ENCODE measurements at regions of chr17 and their contacts with region 1.

Region 1: GRCh38 chr17:30808785-30809286 is 15.7 kb downstream of the CRLF3 start:
- DNase-seq: peak in 8 of 9 experiments; percentile 1 to 88 (median 48)
- ATAC-seq: peak; percentile 85
- H3K4me3 ChIP-seq: peak overlapping the region; percentile 26 to 48
- H3K4me3 Mint-ChIP-seq: peak overlapping the region; percentile 83
- H3K27ac ChIP-seq: peak overlapping the region; percentile 53 to 89
- H3K27ac Mint-ChIP-seq: peak overlapping the region; percentile 99
- H3K4me1 ChIP-seq: peaks cover 63% of the 10 kb centered on the region
- H3K4me1 Mint-ChIP-seq: peaks cover 70% of the 10 kb centered on the region
- H3K27me3 ChIP-seq: no peaks in the 10 kb centered on the region
- H3K27me3 Mint-ChIP-seq: no peaks in the 10 kb centered on the region
- CTCF ChIP-seq: no peak

Region 2: DNA sequence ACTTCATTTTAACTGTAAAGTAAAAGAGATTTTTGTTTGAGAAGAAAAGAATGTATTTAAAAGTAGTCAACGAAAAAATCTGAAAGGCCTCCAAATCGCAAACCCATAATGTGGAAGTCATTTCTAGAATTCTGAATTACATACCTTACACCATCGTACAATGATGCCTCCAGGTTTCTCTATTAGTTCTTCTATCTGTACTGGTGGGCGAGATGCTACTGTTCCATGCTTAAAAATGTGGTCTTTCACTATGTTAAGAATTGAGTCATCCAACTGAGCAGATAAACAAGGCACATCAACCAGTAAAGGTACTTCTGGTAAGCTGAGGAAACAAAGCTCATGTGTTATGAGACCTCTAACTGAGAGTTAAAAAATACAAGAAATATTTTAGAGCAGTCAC is 12.8 kb before region 1 on chr17:
- CTCF ChIA-PET with region 1: interaction called, 14 read pairs
- POLR2A ChIA-PET with region 1: interaction called, 3 read pairs
- intact Hi-C with region 1: loop called in 1 of 2 experiments (anchors 2 kb)
- DNase-seq: no peak
- ATAC-seq: no peak
- H3K4me3 ChIP-seq: no peak overlapping the region
- H3K4me3 Mint-ChIP-seq: no peak overlapping the region
- H3K27ac ChIP-seq: peak overlapping the region in 1 of 2 experiments; percentile 36
- H3K27ac Mint-ChIP-seq: peak overlapping the region; percentile 8
- H3K4me1 ChIP-seq: no peaks in the 10 kb centered on the region
- H3K4me1 Mint-ChIP-seq: peaks cover 18% of the 10 kb centered on the region
- H3K27me3 ChIP-seq: no peaks in the 10 kb centered on the region
- H3K27me3 Mint-ChIP-seq: no peaks in the 10 kb centered on the region
- CTCF ChIP-seq: no peak